Breast epithelium (tissue), 4 donors: ENCODE measurements at regions of chr1 and their contacts with region 1.

Region 1: DNA sequence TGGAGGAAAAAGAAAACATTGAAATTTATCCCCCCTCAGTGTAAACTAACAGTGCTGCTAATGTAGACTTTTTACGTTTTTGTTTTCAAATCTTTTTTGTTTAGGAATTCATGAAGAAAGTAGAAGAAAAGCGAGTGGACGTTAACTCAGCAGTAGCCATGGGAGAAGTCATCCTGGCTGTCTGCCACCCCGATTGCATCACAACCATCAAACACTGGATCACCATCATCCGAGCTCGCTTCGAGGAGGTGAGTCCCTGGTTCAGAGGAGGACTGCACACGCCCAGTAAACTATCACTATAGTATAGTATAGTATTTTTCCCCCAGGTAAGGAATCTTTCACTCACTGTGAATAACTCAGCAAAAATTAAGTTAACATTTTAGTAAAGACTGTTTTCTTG is 37.8 kb upstream of the BMP8A start:
- DNase-seq: no peak
- H3K4me3 ChIP-seq: no peak overlapping the region
- H3K27ac ChIP-seq: no peak overlapping the region
- H3K4me1 ChIP-seq: no peaks in the 10 kb centered on the region
- H3K27me3 ChIP-seq: no peaks in the 10 kb centered on the region
- CTCF ChIP-seq: no peak
- POLR2A ChIP-seq: no peak

Region 2: DNA sequence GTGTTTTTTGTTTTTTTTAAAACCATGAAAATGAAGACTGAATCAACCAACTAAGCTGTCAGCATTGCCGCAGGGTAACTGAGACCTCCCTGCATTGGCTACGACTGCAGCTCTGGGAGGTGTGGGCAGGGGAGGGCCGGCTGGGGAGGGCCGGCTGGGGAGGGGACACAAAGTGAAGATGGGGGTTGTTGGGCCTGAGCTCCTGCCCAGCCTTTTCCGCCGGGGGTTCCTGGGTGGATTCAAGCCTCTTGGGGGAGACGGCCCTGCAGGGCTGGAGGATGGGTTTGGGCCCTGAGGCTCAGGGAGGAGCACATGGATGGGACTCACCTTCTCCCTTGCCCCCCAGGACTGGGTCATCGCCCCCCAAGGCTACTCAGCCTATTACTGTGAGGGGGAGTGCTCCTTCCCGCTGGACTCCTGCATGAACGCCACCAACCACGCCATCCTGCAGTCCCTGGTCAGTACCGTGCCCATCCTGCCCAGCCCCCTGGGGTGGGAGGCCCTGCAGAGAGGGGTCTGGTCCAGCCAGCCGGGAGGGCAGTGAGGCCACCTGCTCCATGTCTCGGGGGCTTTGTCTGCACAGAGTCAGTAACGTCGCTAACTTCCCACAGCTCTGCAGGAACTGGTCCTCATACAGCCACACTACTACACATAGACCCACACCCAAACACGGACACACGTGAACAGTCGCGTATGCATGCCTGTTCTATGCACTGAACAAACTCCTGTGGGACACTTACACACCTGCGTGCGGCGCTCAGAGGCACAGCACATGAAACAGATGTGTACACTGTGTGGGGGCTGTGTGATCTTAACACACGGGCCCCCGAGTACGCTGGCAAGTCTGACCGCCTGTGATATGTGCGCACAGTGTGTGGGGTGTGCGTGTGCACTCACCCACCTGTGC is 69.3 kb after region 1 on chr1:
- intact Hi-C with region 1: loop called (anchors 5 kb)
- DNase-seq: no peak
- H3K4me3 ChIP-seq: no peak overlapping the region
- H3K27ac ChIP-seq: no peak overlapping the region
- H3K4me1 ChIP-seq: no peaks in the 10 kb centered on the region
- H3K27me3 ChIP-seq: no peaks in the 10 kb centered on the region
- CTCF ChIP-seq: no peak
- POLR2A ChIP-seq: no peak